ENCODE measurements at regions of chr1 and their contacts with region 1.

Region 1: GRCh38 chr1:23634842-23635651 is 56.6 kb upstream of the RPL11 start:
- DNase-seq: peak; percentile 60 to 82 (median 77)
- H3K4me3 ChIP-seq: peak overlapping the region in 6 of 7 experiments; percentile 5 to 77 (median 58)
- H3K27ac ChIP-seq: no peak overlapping the region
- H3K4me1 ChIP-seq: peaks cover 2 to 21% (median 20%) of the 10 kb centered on the region in 4 experiments
- H3K27me3 ChIP-seq: peaks cover 0 to 2% (median 0%) of the 10 kb centered on the region in 5 experiments

Region 2: GRCh38 chr1:23530747-23531561 is 104.1 kb before region 1 on chr1 and contains the start of gene E2F2:
- CTCF ChIA-PET with region 1: interaction called, 17 read pairs
- POLR2A ChIA-PET with region 1: no interaction called
- DNase-seq: peak; percentile 81 to 90 (median 87)
- H3K4me3 ChIP-seq: peak within 1 kb of the TSS; percentile 53 to 78 (median 72)
- H3K27ac ChIP-seq: no peak within 1 kb of the TSS
- H3K4me1 ChIP-seq: peaks cover 37 to 80% (median 72%) of the 10 kb centered on the region in 4 experiments
- H3K27me3 ChIP-seq: no peaks in the 10 kb centered on the region

Region 3: DNA sequence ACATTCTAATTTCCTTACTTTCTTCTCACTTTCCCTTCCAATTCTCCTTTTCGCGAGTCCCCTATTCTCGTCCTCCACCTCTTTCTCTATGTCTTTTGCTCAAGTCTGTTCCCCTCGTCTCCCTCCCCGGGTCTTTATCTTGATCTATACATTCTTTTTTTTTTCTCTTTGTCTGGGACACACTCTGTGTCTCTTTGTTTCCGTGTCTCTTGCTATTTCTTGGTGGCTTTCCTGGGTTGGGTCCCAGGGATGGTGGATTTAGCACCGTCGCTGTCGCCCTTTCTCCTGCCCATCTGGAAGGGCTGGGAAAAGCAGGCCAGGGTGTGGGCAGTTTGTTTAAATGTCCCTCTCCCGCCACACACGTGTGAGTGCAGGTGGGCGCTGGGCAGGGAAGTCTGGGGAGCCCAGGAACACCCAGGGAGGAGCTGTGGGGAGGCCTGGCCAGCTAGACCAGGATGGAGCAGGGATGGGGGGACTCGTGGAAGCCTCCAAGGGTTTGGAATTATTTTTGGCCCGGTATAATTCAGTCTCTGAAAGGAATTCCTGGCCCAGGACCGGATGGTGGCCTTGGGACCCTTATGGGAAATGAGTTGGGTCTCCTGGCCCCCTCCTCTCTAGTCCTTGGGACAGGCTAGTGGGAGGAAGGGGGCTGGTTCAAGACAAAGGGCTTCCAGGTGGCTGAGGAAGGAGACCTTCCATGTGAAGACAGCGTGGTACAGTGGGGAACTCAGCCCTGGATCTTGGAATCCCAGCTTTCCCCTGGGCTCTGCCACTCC is 66.3 kb before region 1 on chr1:
- CTCF ChIA-PET with region 1: interaction called, 405 read pairs
- POLR2A ChIA-PET with region 1: no interaction called
- DNase-seq: no peak
- H3K4me3 ChIP-seq: peak overlapping the region in 3 of 7 experiments; percentile 40 to 43 (median 42)
- H3K27ac ChIP-seq: peak overlapping the region in 1 of 2 experiments; percentile 54
- H3K4me1 ChIP-seq: peaks cover 0 to 18% (median 11%) of the 10 kb centered on the region in 4 experiments
- H3K27me3 ChIP-seq: peaks cover 0 to 70% (median 33%) of the 10 kb centered on the region in 5 experiments

Region 4: DNA sequence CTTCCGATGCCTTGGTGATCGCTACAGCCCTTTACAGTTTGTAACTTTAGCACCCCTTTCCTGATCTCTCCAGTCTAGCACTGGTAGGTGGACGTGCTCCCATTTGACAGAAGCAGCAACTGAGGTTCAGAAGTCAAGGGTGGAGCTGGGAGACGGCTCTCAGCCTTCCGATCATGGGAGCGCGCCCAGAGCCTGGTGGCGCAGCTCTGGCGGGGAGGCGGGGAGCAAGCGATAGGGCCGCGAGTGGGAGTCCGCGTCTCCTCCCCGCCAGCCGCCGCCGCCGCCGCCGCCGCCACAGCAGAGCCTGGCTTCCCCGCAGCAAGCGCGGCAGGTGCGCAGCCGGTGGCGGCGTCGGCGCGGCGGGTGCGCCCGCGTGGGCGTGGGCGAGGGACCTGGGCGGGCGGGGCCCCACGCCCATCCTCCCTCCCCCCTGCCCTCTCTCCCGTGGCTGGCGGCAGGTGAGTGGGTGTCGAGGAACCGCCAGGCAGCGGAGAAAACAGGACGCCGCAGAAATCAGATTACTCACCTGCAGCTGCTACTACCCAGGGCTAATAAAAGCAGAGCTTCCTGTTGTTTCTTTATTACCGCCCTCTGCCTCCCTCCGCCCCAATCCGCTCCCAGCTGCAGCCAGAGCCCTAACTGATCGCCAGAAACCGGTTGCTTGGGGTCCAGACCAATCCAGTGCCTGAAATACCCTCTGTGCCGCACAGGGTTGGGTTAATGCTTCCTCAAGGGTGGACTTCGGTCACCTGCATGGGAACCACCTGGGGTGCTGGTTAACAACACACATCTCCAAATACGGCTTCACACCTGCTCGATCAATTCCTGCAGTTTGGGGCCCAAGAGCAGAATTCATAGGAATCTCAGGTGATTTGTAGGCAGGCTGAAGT is 15.5 kb before region 1 on chr1:
- CTCF ChIA-PET with region 1: interaction called, 54 read pairs
- POLR2A ChIA-PET with region 1: no interaction called
- DNase-seq: peak; percentile 28 to 89 (median 76)
- H3K4me3 ChIP-seq: peak overlapping the region in 4 of 7 experiments; percentile 7 to 59 (median 38)
- H3K27ac ChIP-seq: no peak overlapping the region
- H3K4me1 ChIP-seq: peaks cover 0 to 10% (median 6%) of the 10 kb centered on the region in 4 experiments
- H3K27me3 ChIP-seq: peaks cover 0 to 46% (median 22%) of the 10 kb centered on the region in 5 experiments

Region 5: GRCh38 chr1:23651069-23651808 is 16.2 kb after region 1 on chr1:
- CTCF ChIA-PET with region 1: interaction called, 13 read pairs
- POLR2A ChIA-PET with region 1: no interaction called
- DNase-seq: no peak
- H3K4me3 ChIP-seq: no peak overlapping the region
- H3K27ac ChIP-seq: no peak overlapping the region
- H3K4me1 ChIP-seq: no peaks in the 10 kb centered on the region
- H3K27me3 ChIP-seq: peaks cover 0 to 13% (median 8%) of the 10 kb centered on the region in 5 experiments

Measured in common myeloid progenitor, CD34-positive (primary cell).